H1 (cell line): ENCODE measurements at regions of chr3 and their contacts with region 1.

Region 1: DNA sequence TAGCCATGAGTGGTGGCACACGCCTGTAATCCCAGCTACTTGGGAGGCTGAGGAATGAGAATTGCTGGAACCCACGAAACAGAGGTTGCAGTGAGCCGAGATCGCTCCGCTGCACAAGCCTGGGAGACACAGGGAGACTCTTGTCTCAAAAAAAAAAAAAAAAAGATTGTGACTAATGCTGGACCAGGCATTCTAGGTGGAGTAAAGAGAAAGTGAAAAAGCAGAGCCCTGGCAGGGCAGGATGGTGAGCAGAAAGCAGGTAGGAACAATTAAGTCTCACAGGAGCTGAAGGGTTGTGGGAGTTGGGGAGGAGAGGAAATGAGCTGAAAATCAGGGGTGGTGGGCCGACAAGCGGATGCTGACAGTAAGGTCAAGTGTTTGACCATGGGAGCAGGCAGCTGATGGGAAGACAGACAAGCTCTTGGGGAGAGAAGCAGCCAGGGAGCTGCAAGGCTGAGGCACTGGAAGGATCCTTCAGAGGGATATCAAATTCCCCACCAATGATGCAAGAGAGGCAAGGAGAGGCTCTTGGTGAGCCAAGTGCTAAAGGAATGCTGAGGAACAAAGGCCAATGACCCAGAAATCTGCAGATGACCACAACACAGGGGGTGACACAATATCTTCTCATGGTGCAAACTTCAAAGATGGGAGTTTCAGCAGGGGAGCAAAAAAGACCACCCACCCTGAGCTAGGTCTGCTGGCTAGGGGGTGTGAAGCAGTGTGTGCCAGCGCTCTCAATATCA is 251.1 kb downstream of the ULK4 start:
- DNase-seq: peak in 1 of 2 experiments; percentile 41
- H3K4me3 ChIP-seq: no peak overlapping the region
- H3K27ac ChIP-seq: peak overlapping the region; percentile 3; the same call in 1 of the 2 replicates
- H3K4me1 ChIP-seq: peaks cover 3 to 5% (median 4%) of the 10 kb centered on the region in 4 experiments; a peak in 5 of 7 replicates
- H3K27me3 ChIP-seq: no peaks in the 10 kb centered on the region
- CTCF ChIP-seq: no peak
- EP300 ChIP-seq: no peak
- POLR2A ChIP-seq: no peak
- RAD21 ChIP-seq: no peak

Region 2: DNA sequence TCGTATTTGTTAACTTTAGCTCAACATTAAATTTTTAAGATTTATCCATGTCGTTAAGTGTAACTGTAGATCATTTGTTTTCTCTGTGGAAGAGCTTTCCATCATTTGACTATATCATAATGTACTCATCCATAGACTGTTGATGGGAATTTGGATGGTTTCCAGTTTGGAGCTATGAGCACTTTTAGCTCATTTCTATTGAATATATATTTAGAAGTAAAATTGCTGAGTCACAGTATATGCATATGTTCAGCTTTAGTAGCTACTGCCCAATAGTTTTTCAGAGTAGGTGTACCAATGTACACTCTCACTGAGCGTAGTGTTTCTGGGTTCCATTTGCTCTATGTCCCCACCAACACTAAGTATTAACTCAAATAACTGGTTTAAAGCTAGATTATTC is 11.9 kb before region 1 on chr3:
- CTCF ChIA-PET with region 1: interaction called, 18 read pairs
- POLR2A ChIA-PET with region 1: no interaction called
- DNase-seq: no peak
- H3K4me3 ChIP-seq: no peak overlapping the region
- H3K27ac ChIP-seq: no peak overlapping the region
- H3K4me1 ChIP-seq: peaks cover 0 to 5% (median 0%) of the 10 kb centered on the region in 4 experiments; a peak in 1 of 7 replicates
- H3K27me3 ChIP-seq: no peaks in the 10 kb centered on the region
- CTCF ChIP-seq: no peak
- EP300 ChIP-seq: no peak
- POLR2A ChIP-seq: no peak
- RAD21 ChIP-seq: no peak